PC-3 (cell line): ENCODE measurements at regions of chrX and their contacts with region 1.

Region 1: GRCh38 chrX:123779908-123780396 is 47.1 kb upstream of the THOC2 start:
- DNase-seq: peak; percentile 56
- ATAC-seq: peak; percentile 56
- H3K4me3 ChIP-seq: no peak overlapping the region
- H3K27ac ChIP-seq: peak overlapping the region; percentile 79
- H3K4me1 ChIP-seq: peaks cover 20% of the 10 kb centered on the region
- H3K27me3 ChIP-seq: no peaks in the 10 kb centered on the region
- CTCF ChIP-seq: no peak

Region 2: DNA sequence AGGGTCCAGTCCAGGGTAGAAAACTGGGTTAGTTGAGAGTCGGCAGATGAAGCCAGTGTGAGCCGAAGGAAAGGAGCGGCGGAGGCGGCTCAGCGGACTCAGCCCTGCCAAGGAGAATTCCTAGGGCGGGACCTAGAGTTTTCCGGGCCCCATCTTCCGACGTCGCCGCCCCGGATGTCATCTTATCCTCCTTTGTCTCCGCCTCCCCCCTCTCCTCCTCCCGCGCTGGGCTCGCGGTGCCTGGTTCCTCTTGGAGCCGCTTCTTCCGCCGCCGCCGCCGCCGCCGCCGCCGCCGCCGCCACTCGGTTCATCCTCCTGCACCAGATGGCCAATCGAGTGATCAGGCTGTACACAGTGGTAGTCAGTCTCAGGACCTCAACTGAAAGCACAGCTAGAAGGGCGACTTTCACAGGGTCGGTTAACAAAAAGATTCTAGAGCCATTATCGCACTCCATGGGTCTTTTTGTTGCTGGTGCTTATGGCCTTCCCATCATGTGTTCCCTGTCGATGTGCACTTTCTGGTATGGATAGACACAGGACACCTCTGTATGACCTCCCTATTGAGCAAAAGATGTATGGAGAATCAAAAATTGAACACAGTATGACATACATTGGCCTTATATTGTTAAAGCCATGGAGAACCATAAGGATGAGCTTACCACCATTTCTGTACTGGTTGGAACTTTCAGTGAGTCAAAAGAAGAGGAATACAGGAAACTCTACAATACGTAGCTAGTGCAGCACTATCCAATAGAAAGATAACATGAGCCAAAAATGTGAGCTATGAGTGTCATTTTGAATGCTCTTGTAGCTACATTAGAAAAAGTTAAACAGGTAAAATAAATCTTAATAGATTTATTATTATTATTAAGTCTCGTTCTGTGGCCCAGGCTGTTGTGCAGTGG is 14.7 kb before region 1 on chrX:
- CTCF ChIA-PET with region 1: interaction called, 10 read pairs
- POLR2A ChIA-PET with region 1: no interaction called
- intact Hi-C with region 1: no loop called
- DNase-seq: peak; percentile 83
- ATAC-seq: peak; percentile 100
- H3K4me3 ChIP-seq: peak overlapping the region; percentile 63
- H3K27ac ChIP-seq: 0 out of 2 replicates have a peak overlapping the region, but pooled peaks have one; percentile 19
- H3K4me1 ChIP-seq: 0 out of 2 replicates have a peak, but pooled peaks cover 5% of the 10 kb centered on the region
- H3K27me3 ChIP-seq: no peaks in the 10 kb centered on the region
- CTCF ChIP-seq: no peak

Region 3: GRCh38 chrX:123797543-123798447 is 17.8 kb after region 1 on chrX:
- CTCF ChIA-PET with region 1: interaction called, 15 read pairs
- POLR2A ChIA-PET with region 1: no interaction called
- intact Hi-C with region 1: no loop called
- DNase-seq: peak; percentile 7
- ATAC-seq: no peak
- H3K4me3 ChIP-seq: no peak overlapping the region
- H3K27ac ChIP-seq: no peak overlapping the region
- H3K4me1 ChIP-seq: peaks cover 14% of the 10 kb centered on the region
- H3K27me3 ChIP-seq: no peaks in the 10 kb centered on the region
- CTCF ChIP-seq: no peak

Region 4: GRCh38 chrX:123976706-123977316 is 196.9 kb after region 1 on chrX:
- CTCF ChIA-PET with region 1: interaction called, 16 read pairs
- POLR2A ChIA-PET with region 1: no interaction called
- intact Hi-C with region 1: no loop called
- DNase-seq: peak; percentile 69
- ATAC-seq: peak; percentile 66
- H3K4me3 ChIP-seq: no peak overlapping the region
- H3K27ac ChIP-seq: no peak overlapping the region
- H3K4me1 ChIP-seq: peaks cover 14% of the 10 kb centered on the region
- H3K27me3 ChIP-seq: no peaks in the 10 kb centered on the region
- CTCF ChIP-seq: peak; percentile 67

Region 5: GRCh38 chrX:124005228-124005627 is 225.3 kb after region 1 on chrX:
- CTCF ChIA-PET with region 1: no interaction called
- POLR2A ChIA-PET with region 1: no interaction called
- intact Hi-C with region 1: no loop called
- DNase-seq: no peak
- ATAC-seq: no peak
- H3K4me3 ChIP-seq: no peak overlapping the region
- H3K27ac ChIP-seq: no peak overlapping the region
- H3K4me1 ChIP-seq: peaks cover 15% of the 10 kb centered on the region; the same call in 1 of the 2 replicates
- H3K27me3 ChIP-seq: no peaks in the 10 kb centered on the region
- CTCF ChIP-seq: no peak